CD4-positive, alpha-beta memory T cell (primary cell): ENCODE measurements at regions of chr21 and their contacts with region 1.

Region 1: GRCh38 chr21:44801468-44802395 is at the start of gene UBE2G2:
- DNase-seq: peak; percentile 81 to 91 (median 88)
- H3K4me3 ChIP-seq: peak within 1 kb of the TSS; percentile 48 to 84
- H3K4me3 Mint-ChIP-seq: peak within 1 kb of the TSS; percentile 95 to 100 (median 98)
- H3K27ac ChIP-seq: peak within 1 kb of the TSS; percentile 57
- H3K27ac Mint-ChIP-seq: peak within 1 kb of the TSS; percentile 88 to 99 (median 98)
- H3K4me1 ChIP-seq: peaks cover 30% of the 10 kb centered on the region
- H3K4me1 Mint-ChIP-seq: peaks cover 31 to 49% (median 42%) of the 10 kb centered on the region in 4 donors
- H3K27me3 ChIP-seq: no peaks in the 10 kb centered on the region
- H3K27me3 Mint-ChIP-seq: no peaks in the 10 kb centered on the region
- total RNA-seq, gene UBE2G2: 125 to 131 TPM

Region 2: GRCh38 chr21:44428281-44428942 is 373.3 kb before region 1 on chr21:
- CTCF ChIA-PET with region 1: no interaction called
- POLR2A ChIA-PET with region 1: no interaction called
- intact Hi-C with region 1: no loop called
- DNase-seq: peak; percentile 63 to 80 (median 66)
- H3K4me3 ChIP-seq: no peak overlapping the region
- H3K4me3 Mint-ChIP-seq: no peak overlapping the region
- H3K27ac ChIP-seq: no peak overlapping the region
- H3K27ac Mint-ChIP-seq: peak overlapping the region in 1 of 7 donors; percentile 9
- H3K4me1 ChIP-seq: no peaks in the 10 kb centered on the region
- H3K4me1 Mint-ChIP-seq: no peaks in the 10 kb centered on the region
- H3K27me3 ChIP-seq: no peaks in the 10 kb centered on the region
- H3K27me3 Mint-ChIP-seq: no peaks in the 10 kb centered on the region

Region 3: GRCh38 chr21:44510508-44511210 is 291.1 kb before region 1 on chr21:
- CTCF ChIA-PET with region 1: interaction called, 24 read pairs
- POLR2A ChIA-PET with region 1: interaction called, 5 read pairs
- intact Hi-C with region 1: no loop called
- DNase-seq: peak; percentile 75 to 84 (median 81)
- H3K4me3 ChIP-seq: peak overlapping the region in 1 of 2 donors; percentile 51
- H3K4me3 Mint-ChIP-seq: peak overlapping the region in 7 of 8 donors; percentile 36 to 77 (median 67)
- H3K27ac ChIP-seq: no peak overlapping the region
- H3K27ac Mint-ChIP-seq: no peak overlapping the region
- H3K4me1 ChIP-seq: peaks cover 10% of the 10 kb centered on the region
- H3K4me1 Mint-ChIP-seq: peaks cover 0 to 1% (median 0%) of the 10 kb centered on the region in 4 donors
- H3K27me3 ChIP-seq: no peaks in the 10 kb centered on the region
- H3K27me3 Mint-ChIP-seq: no peaks in the 10 kb centered on the region

Region 4: DNA sequence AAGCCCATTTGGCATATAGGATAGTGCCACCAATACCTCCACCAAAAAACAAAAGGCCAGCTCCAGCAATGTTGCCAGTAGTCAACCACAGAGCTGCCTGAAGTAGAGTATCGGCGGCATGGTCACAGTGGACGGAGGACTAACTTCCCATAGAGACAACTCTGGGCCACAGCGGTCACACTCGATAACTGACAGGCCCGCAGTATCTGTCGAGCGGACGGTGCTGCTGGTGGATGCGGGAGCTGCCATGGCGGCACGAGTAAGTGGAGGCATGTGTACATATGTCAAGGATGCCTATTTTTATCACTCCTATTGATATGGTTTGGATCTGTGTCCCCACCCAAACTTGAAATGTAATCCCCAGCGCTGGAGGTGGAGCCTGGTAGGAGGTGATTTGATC is 123.9 kb before region 1 on chr21:
- CTCF ChIA-PET with region 1: no interaction called
- POLR2A ChIA-PET with region 1: no interaction called
- intact Hi-C with region 1: no loop called
- DNase-seq: no peak
- H3K4me3 ChIP-seq: no peak overlapping the region
- H3K4me3 Mint-ChIP-seq: no peak overlapping the region
- H3K27ac ChIP-seq: no peak overlapping the region
- H3K27ac Mint-ChIP-seq: no peak overlapping the region
- H3K4me1 ChIP-seq: no peaks in the 10 kb centered on the region
- H3K4me1 Mint-ChIP-seq: peaks cover 0 to 2% (median 0%) of the 10 kb centered on the region in 4 donors
- H3K27me3 ChIP-seq: no peaks in the 10 kb centered on the region
- H3K27me3 Mint-ChIP-seq: peaks cover 2% of the 10 kb centered on the region in 2 donors

Region 5: DNA sequence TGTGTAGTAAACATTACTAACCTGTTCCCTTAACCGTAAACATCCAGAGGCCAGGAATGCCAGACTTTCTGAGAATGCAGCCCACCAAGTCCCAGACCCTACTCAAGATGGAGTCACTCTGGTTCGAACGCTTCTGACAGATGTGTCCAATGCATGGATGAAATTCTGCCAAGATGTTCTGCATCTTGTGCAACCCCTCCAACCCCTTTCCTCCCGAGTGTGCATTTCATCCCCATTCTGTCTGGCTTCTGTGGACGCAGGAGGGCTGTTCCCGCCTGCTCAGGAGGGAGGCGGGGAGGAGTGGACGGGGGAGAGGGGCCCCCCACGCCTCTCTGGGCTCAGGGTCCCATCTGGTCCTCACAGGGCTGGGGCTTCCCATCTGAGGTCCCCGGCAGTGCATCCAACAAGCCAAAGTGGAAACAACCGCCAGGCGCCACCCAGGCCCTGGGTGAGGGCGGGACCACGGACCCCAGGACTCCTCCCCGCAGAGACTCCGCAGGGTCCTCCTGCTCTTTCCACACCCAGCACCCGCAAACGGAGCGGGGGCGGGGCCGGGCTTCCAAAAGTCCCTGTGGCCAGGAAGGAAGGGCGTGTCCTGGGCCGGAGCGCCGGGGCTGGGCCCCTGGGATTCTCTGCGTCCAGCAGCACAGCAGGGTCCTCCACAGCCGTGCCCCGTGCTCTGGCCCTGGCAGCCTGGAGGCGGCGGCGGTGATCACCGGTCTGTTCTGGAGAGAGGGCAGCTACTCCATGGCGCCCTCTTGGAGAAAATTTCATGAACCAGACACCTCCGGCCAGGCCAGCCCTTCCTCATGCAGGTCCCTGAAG is 43.9 kb after region 1 on chr21:
- CTCF ChIA-PET with region 1: interaction called, 10 read pairs
- POLR2A ChIA-PET with region 1: interaction called, 8 read pairs
- intact Hi-C with region 1: loop called (anchors 1 kb)
- DNase-seq: peak; percentile 19 to 66 (median 33)
- H3K4me3 ChIP-seq: peak overlapping the region; percentile 14 to 25
- H3K4me3 Mint-ChIP-seq: peak overlapping the region; percentile 48 to 83 (median 70)
- H3K27ac ChIP-seq: peak overlapping the region; percentile 19
- H3K27ac Mint-ChIP-seq: peak overlapping the region in 4 of 7 donors; percentile 42 to 72 (median 58)
- H3K4me1 ChIP-seq: peaks cover 19% of the 10 kb centered on the region
- H3K4me1 Mint-ChIP-seq: peaks cover 6 to 24% (median 15%) of the 10 kb centered on the region in 4 donors
- H3K27me3 ChIP-seq: no peaks in the 10 kb centered on the region
- H3K27me3 Mint-ChIP-seq: peaks cover 5% of the 10 kb centered on the region in 2 donors

Region 6: DNA sequence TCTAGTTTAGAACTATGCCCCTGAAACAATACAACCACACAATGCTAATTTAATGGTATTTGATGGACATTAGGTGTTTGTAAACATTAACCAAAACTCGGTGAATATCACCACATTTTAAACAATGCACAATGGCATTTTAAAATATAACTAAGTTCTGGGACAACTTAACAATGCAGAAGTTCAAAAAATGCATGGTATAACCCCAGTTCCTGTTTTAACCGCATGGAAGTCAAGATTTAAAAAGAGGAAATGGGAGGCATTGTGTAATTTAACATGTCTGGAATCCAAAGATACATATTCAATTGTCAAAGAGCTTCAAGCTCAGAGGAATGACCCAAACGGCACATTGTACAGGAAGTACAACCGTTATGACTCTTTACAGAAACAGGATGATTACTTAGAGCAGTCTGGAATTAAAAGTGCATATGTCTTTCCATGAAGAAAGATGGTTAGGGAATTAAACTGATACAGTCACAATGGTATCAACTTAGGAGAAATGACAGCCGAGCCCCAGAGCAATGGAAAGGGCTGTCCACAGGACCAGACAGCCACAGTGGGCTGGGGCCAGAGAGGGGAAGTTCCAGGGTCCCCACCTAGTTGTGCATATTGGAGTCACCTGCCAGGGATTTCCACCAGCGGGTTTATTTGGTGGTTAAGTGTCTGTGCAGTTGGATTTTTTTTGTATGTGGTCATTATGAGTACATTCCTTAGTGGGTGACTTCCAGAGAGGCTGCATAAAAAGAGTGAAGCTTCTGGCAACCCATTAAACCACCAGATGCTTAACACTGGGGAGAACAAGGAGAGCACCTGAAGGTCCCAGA is 79.2 kb after region 1 on chr21:
- CTCF ChIA-PET with region 1: interaction called, 82 read pairs
- POLR2A ChIA-PET with region 1: interaction called, 4 read pairs
- intact Hi-C with region 1: no loop called
- DNase-seq: peak in 1 of 5 donors; percentile 79
- H3K4me3 ChIP-seq: no peak overlapping the region
- H3K4me3 Mint-ChIP-seq: peak overlapping the region in 4 of 8 donors; percentile 6 to 45 (median 26)
- H3K27ac ChIP-seq: peak overlapping the region; percentile 20
- H3K27ac Mint-ChIP-seq: peak overlapping the region; percentile 9 to 88 (median 76)
- H3K4me1 ChIP-seq: peaks cover 28% of the 10 kb centered on the region
- H3K4me1 Mint-ChIP-seq: peaks cover 17 to 33% (median 23%) of the 10 kb centered on the region in 4 donors
- H3K27me3 ChIP-seq: no peaks in the 10 kb centered on the region
- H3K27me3 Mint-ChIP-seq: no peaks in the 10 kb centered on the region

Region 7: DNA sequence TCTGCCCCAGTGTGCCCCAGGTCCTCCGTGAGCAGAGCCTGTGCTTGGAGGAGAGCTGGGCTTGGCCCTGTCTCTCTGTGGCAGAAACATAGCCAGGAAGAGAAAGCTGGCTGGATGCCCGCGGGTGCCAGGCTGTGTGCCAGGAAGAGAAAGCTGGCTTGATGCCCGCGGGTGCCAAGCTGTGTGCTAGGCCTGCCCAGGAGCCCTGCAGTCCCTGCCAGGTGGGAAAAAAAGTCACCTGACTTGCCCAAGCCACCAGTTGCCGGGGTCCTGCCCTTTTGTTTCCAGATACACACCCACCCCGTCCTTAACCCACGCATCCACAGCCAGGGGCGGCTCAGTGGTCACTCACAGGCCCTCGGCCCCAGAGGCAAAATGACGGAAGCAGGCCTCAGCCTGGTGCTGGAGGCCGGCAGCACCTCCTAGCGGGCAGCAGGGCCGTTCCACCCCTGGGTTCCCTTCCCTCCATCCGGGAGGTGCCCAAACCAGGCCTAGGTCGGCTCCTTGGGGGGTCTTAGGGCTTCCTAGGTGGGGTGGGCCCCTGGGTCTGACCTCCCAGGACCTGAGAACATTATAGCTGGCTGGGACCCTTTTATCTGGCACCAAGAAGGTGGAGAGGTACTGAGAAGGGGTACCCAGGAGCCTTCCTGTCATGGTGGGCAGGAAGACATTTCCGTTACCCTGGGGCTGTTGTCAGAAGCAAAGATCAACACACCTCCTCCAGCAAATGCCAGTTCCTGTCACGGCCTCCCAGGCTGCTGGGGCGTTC is 109.8 kb after region 1 on chr21:
- CTCF ChIA-PET with region 1: interaction called, 12 read pairs
- POLR2A ChIA-PET with region 1: interaction called, 12 read pairs
- intact Hi-C with region 1: loop called (anchors 1 kb)
- DNase-seq: peak; percentile 72 to 80 (median 79)
- H3K4me3 ChIP-seq: peak overlapping the region; percentile 42 to 43
- H3K4me3 Mint-ChIP-seq: peak overlapping the region; percentile 63 to 90 (median 83)
- H3K27ac ChIP-seq: peak overlapping the region; percentile 61
- H3K27ac Mint-ChIP-seq: peak overlapping the region; percentile 88 to 98 (median 94)
- H3K4me1 ChIP-seq: peaks cover 92% of the 10 kb centered on the region
- H3K4me1 Mint-ChIP-seq: peaks cover 35 to 80% (median 54%) of the 10 kb centered on the region in 4 donors
- H3K27me3 ChIP-seq: no peaks in the 10 kb centered on the region
- H3K27me3 Mint-ChIP-seq: no peaks in the 10 kb centered on the region

Region 8: GRCh38 chr21:44949779-44950198 is 148.1 kb after region 1 on chr21:
- CTCF ChIA-PET with region 1: interaction called, 15 read pairs
- POLR2A ChIA-PET with region 1: no interaction called
- intact Hi-C with region 1: no loop called
- DNase-seq: peak; percentile 72 to 80 (median 75)
- H3K4me3 ChIP-seq: no peak overlapping the region
- H3K4me3 Mint-ChIP-seq: no peak overlapping the region
- H3K27ac ChIP-seq: no peak overlapping the region
- H3K27ac Mint-ChIP-seq: peak overlapping the region in 1 of 7 donors; percentile 52
- H3K4me1 ChIP-seq: peaks cover 9% of the 10 kb centered on the region
- H3K4me1 Mint-ChIP-seq: peaks cover 4 to 22% (median 11%) of the 10 kb centered on the region in 4 donors
- H3K27me3 ChIP-seq: no peaks in the 10 kb centered on the region
- H3K27me3 Mint-ChIP-seq: no peaks in the 10 kb centered on the region

Region 9: GRCh38 chr21:45130324-45130774 is 328.6 kb after region 1 on chr21:
- CTCF ChIA-PET with region 1: interaction called, 6 read pairs
- POLR2A ChIA-PET with region 1: no interaction called
- intact Hi-C with region 1: loop called (anchors 1 kb)
- DNase-seq: no peak
- H3K4me3 ChIP-seq: no peak overlapping the region
- H3K4me3 Mint-ChIP-seq: no peak overlapping the region
- H3K27ac ChIP-seq: no peak overlapping the region
- H3K27ac Mint-ChIP-seq: no peak overlapping the region
- H3K4me1 ChIP-seq: no peaks in the 10 kb centered on the region
- H3K4me1 Mint-ChIP-seq: peaks cover 16 to 34% (median 24%) of the 10 kb centered on the region in 4 donors
- H3K27me3 ChIP-seq: no peaks in the 10 kb centered on the region
- H3K27me3 Mint-ChIP-seq: no peaks in the 10 kb centered on the region